ENCODE measurements at regions of chr13 and their contacts with region 1.

Region 1: GRCh38 chr13:100588331-100589177 is at the start of gene GGACT:
- DNase-seq: peak; percentile 84
- H3K4me3 Mint-ChIP-seq: peak within 1 kb of the TSS; percentile 75
- H3K27ac Mint-ChIP-seq: peak within 1 kb of the TSS; percentile 87
- H3K4me1 Mint-ChIP-seq: peaks cover 39% of the 10 kb centered on the region
- H3K27me3 Mint-ChIP-seq: no peaks in the 10 kb centered on the region
- total RNA-seq, gene GGACT: 3.9 to 6.6 TPM

Region 2: DNA sequence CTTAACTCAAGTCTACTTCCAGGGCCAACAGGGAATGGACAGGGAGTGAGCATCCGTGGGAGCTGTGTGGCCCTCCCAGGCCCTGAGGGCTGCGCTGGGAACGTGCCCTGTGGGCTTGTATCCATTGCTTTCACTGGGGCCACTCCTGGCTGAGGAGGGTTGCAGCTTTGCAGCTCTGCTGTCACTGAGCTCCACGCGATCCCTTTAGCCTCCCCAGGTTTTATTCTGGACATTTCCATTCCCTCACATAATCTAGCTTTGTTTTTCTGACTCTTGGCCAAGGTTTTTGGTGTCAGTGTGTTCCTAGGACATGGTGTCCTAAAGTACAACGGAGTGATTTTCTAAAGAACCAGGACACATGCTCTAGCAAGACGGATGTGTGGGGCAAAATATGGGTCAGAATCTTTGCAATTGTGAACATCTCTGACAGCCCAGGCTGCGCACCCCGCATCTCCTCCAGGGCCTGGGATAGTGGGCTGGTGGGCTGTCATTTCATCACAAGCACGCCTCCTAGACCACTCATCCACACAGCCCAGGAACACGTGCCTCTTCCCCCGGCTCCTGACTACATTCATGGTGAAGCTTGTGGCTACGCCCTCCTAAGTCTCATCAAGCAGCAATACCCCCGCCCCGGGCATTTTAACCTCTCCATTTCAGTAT is 27.9 kb before region 1 on chr13:
- CTCF ChIA-PET with region 1: no interaction called
- intact Hi-C with region 1: no loop called
- DNase-seq: no peak
- H3K4me3 Mint-ChIP-seq: no peak overlapping the region
- H3K27ac Mint-ChIP-seq: no peak overlapping the region
- H3K4me1 Mint-ChIP-seq: no peaks in the 10 kb centered on the region
- H3K27me3 Mint-ChIP-seq: no peaks in the 10 kb centered on the region

Region 3: DNA sequence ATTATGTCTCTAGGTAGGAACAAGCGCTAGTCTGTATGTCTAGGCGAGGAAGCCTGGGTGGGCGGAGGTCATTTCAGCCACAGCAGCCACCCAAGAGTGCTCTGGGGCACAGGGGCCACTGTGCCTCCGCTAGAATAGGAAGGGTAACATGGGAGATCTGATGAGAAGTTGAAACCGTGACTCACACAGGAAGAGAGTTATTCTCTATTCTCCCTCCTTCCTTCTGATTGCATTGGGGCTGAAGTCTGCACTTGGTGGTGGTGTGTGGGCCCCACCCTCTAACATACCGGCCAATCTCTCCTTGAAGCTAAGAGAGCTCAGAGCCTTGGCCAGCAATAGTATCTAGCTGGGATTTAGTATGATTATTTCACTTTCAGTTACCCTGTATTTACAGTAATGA is 20.4 kb after region 1 on chr13:
- CTCF ChIA-PET with region 1: interaction called, 5 read pairs
- intact Hi-C with region 1: loop called (anchors 1 kb)
- DNase-seq: peak; percentile 30
- H3K4me3 Mint-ChIP-seq: no peak overlapping the region
- H3K27ac Mint-ChIP-seq: no peak overlapping the region
- H3K4me1 Mint-ChIP-seq: peaks cover 11% of the 10 kb centered on the region
- H3K27me3 Mint-ChIP-seq: no peaks in the 10 kb centered on the region

Region 4: GRCh38 chr13:100875392-100876043 is 287.0 kb after region 1 on chr13:
- CTCF ChIA-PET with region 1: no interaction called
- intact Hi-C with region 1: loop called (anchors 5 kb)
- DNase-seq: peak; percentile 31
- H3K4me3 Mint-ChIP-seq: no peak overlapping the region
- H3K27ac Mint-ChIP-seq: peak overlapping the region; percentile 64
- H3K4me1 Mint-ChIP-seq: peaks cover 8% of the 10 kb centered on the region
- H3K27me3 Mint-ChIP-seq: peaks cover 57% of the 10 kb centered on the region